Heart right ventricle (tissue), 16 donors: ENCODE measurements at regions of chr1 and their contacts with region 1.

Region 1: GRCh38 chr1:44002606-44003157 is 11.3 kb downstream of the CCDC24 start:
- DNase-seq: no peak
- ATAC-seq: no peak
- H3K4me3 ChIP-seq: no peak overlapping the region
- H3K27ac ChIP-seq: no peak overlapping the region
- H3K4me1 ChIP-seq: peaks cover 0 to 6% (median 3%) of the 10 kb centered on the region in 9 donors
- H3K27me3 ChIP-seq: no peaks in the 10 kb centered on the region
- CTCF ChIP-seq: no peak

Region 2: DNA sequence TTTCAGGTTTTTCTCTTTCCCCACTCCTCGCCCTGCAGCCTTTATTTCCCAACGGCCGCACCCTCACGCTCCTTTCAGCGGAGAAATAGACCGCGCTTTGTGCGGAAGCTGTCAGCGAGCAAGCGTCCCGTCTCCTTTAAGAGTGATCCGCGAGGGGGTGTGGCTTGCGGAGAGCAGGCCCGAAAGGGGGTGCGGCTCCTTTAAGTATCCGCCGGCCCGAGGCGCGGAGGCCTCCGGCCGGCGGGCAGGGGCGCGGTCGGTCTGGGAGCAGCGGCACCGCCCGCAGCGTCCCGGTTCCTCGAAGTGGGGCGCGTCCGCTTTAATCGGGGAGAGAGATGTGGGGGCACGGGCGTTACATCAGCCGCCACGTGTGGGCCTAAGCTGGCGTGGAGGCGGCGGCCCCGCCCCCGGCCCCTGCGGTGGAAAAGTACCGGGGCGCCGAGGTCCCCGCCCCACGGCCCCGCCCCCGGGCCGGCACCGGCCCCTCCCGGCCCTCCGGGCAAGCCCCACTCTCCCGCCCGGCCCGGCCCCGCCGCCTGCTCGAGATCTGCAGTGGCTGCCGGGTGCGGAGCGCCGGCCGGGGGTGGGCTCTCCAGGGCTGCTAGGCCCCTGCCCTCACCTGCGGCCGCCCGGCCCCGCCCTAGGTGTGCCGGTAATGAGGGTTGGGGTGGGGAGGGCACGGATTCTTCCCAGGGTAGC is 27.4 kb after region 1 on chr1:
- intact Hi-C with region 1: loop called in 3 of 10 experiments (anchors 2 to 5 kb)
- DNase-seq: peak; percentile 87 to 88
- ATAC-seq: peak; percentile 87 to 93 (median 90)
- H3K4me3 ChIP-seq: peak overlapping the region; percentile 68 to 97 (median 82)
- H3K27ac ChIP-seq: peak overlapping the region; percentile 26 to 89 (median 80)
- H3K4me1 ChIP-seq: peaks cover 6 to 40% (median 21%) of the 10 kb centered on the region in 9 donors
- H3K27me3 ChIP-seq: peaks cover 0 to 11% (median 0%) of the 10 kb centered on the region in 7 donors
- CTCF ChIP-seq: no peak

Region 3: DNA sequence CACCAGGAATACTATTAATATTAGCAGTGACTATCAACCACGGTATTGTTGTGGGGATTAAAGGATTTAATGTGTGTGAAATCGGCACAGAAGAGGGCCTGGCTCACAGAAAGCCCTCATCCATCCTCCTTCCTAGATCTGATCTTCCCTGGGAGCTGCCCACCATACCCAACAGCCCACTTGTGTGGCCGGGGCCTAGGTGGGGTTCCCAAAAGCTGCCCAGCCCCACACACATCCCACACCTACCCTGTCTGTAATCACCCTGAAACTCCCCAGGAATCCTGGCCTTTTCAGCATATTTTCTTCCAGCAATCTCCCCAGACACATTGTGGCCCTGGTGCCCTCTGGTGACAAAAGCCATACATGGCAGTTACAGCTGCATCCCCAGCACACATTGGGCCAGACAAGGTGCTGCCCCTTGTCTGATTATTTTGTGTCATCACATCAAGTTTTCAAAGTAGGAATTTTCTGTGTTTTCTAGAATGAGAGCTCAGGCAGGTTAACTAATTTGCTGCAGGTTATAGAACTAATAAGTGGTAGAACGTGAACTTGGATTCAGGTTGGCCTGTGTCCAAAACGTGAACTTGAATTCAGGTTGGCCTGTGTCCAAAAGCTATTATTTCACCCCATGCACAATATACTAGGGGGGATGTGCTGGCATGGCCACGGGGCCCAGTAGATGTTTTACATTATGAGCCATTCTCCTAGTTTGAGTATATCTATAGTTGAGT is 33.9 kb after region 1 on chr1:
- intact Hi-C with region 1: loop called in 8 of 10 experiments (anchors 1 to 5 kb)
- DNase-seq: peak; percentile 44 to 60
- ATAC-seq: peak; percentile 53 to 76 (median 66)
- H3K4me3 ChIP-seq: no peak overlapping the region
- H3K27ac ChIP-seq: peak overlapping the region in 9 of 10 donors; percentile 3 to 74 (median 46)
- H3K4me1 ChIP-seq: peaks cover 6 to 38% (median 23%) of the 10 kb centered on the region in 9 donors
- H3K27me3 ChIP-seq: peaks cover 0 to 5% (median 0%) of the 10 kb centered on the region in 7 donors
- CTCF ChIP-seq: peak; percentile 50 to 88 (median 79)

Region 4: GRCh38 chr1:44049839-44050238 is 47.2 kb after region 1 on chr1:
- intact Hi-C with region 1: loop called in 5 of 10 experiments (anchors 1 to 5 kb)
- DNase-seq: no peak
- ATAC-seq: no peak
- H3K4me3 ChIP-seq: no peak overlapping the region
- H3K27ac ChIP-seq: peak overlapping the region in 1 of 10 donors; percentile 67
- H3K4me1 ChIP-seq: peaks cover 0 to 32% (median 0%) of the 10 kb centered on the region in 9 donors
- H3K27me3 ChIP-seq: no peaks in the 10 kb centered on the region
- CTCF ChIP-seq: no peak